ENCODE measurements at regions of chr3 and their contacts with region 1.

Region 1: DNA sequence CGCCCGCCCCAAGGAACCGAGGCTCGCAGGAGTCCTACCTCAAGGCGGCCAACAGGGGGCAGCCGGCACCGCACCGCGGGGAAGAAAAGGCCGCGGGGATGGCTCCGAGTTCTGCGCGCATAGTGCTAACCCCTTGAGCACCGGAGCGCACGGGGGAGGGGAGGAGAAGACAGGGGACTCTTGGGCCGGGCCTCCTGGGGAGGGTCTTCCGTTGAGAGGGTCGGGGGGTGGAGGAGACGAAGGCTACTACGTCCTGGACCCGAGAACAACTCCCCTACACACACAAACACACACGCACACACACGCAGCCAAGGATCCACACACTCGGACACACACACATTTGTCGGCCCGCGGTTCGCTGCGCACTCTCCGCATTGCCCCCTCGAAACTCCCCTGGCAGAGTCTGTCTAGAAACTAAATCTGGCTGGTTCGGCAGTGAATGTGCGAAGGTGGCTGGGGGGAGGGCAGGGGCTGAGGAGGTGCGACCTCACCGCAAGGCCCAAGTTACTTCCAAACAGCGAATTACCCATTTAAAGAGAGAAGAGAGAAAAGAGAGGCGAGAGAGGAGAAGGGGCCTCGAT is 1.8 kb downstream of the WNT5A start:
- DNase-seq: peak; percentile 77 to 95
- H3K4me3 ChIP-seq: peak overlapping the region; percentile 73 to 94 (median 78)
- H3K27ac ChIP-seq: peak overlapping the region; percentile 57 to 83 (median 76)
- H3K4me1 ChIP-seq: peaks cover 46 to 82% (median 79%) of the 10 kb centered on the region in 4 donors
- H3K27me3 ChIP-seq: peaks cover 0 to 100% (median 83%) of the 10 kb centered on the region in 3 donors
- CTCF ChIP-seq: peak in 3 of 7 experiments; percentile 88 to 90 (median 90)
- EP300 ChIP-seq: no peak
- POLR2A ChIP-seq: no peak

Region 2: GRCh38 chr3:55746808-55747413 is 261.6 kb after region 1 on chr3:
- intact Hi-C with region 1: loop called (anchors 10 kb)
- DNase-seq: peak in 1 of 2 donors; percentile 29
- H3K4me3 ChIP-seq: no peak overlapping the region
- H3K27ac ChIP-seq: no peak overlapping the region
- H3K4me1 ChIP-seq: no peaks in the 10 kb centered on the region
- H3K27me3 ChIP-seq: no peaks in the 10 kb centered on the region
- CTCF ChIP-seq: peak in 1 of 7 experiments; percentile 24
- EP300 ChIP-seq: no peak
- POLR2A ChIP-seq: no peak

Region 3: DNA sequence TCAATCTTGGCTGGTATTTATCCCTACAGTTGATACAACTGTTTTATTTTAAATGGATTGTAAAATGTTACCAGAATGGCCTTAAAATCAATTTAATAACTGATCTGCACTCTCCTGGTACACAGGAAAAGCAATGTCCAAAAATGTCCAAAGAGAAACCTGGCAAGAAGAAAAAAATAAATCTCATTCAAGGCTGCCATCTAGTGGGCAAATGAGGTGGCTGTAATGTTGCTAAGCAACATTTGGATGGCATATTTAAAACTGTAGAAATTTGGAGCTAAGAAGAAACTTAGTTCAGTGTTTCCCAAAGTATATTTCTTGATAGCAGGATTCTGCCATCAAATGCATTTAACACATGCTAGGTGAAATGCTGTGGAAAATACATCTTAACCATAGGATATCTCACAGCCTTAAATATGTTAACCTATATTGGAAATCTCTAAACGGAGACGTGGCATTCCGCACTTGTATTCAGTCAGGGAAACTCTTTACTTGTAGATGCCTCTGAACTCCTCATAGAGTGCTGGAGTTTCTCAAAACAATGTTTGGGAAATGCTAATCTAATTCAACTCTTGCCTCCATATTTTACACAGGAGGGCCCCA is 766.1 kb after region 1 on chr3:
- intact Hi-C with region 1: loop called (anchors 10 kb)
- DNase-seq: peak; percentile 34 to 82
- H3K4me3 ChIP-seq: no peak overlapping the region
- H3K27ac ChIP-seq: no peak overlapping the region
- H3K4me1 ChIP-seq: no peaks in the 10 kb centered on the region
- H3K27me3 ChIP-seq: no peaks in the 10 kb centered on the region
- CTCF ChIP-seq: peak in 5 of 7 experiments; percentile 28 to 72 (median 64)
- EP300 ChIP-seq: no peak
- POLR2A ChIP-seq: no peak